Psoas muscle (tissue), 8 donors: ENCODE measurements at regions of chr7 and their contacts with region 1.

Region 1: GRCh38 chr7:139075031-139075652 is 34.4 kb downstream of the ZC3HAV1 start:
- DNase-seq: peak; percentile 56 to 65
- ATAC-seq: peak; percentile 65 to 92 (median 79)
- H3K4me3 ChIP-seq: no peak overlapping the region
- H3K27ac ChIP-seq: no peak overlapping the region
- H3K4me1 ChIP-seq: no peaks in the 10 kb centered on the region
- H3K27me3 ChIP-seq: no peaks in the 10 kb centered on the region
- CTCF ChIP-seq: peak; percentile 84

Region 2: DNA sequence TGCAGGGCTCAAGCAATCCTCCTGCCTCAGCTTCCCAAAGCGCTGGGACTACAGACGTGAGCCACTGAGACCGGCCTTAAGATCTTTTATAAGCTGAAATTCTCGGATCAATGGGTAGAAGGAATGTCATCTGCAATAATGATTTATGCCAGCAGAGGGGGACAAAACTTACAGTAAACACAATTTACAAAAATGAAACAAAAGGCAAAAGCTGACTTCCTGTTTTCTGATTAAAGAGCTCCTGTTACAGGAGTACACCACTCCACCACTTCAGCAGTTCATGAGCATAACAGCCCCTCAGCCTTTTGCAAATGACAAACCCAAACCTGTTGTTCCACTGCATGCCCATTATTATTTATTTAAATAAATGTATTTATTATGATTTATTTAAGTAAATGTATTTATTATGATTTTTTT is 188.6 kb before region 1 on chr7:
- intact Hi-C with region 1: loop called (anchors 5 to 10 kb)
- DNase-seq: no peak
- ATAC-seq: no peak
- H3K4me3 ChIP-seq: no peak overlapping the region
- H3K27ac ChIP-seq: no peak overlapping the region
- H3K4me1 ChIP-seq: peaks cover 7% of the 10 kb centered on the region
- H3K27me3 ChIP-seq: no peaks in the 10 kb centered on the region
- CTCF ChIP-seq: peak; percentile 57

Region 3: DNA sequence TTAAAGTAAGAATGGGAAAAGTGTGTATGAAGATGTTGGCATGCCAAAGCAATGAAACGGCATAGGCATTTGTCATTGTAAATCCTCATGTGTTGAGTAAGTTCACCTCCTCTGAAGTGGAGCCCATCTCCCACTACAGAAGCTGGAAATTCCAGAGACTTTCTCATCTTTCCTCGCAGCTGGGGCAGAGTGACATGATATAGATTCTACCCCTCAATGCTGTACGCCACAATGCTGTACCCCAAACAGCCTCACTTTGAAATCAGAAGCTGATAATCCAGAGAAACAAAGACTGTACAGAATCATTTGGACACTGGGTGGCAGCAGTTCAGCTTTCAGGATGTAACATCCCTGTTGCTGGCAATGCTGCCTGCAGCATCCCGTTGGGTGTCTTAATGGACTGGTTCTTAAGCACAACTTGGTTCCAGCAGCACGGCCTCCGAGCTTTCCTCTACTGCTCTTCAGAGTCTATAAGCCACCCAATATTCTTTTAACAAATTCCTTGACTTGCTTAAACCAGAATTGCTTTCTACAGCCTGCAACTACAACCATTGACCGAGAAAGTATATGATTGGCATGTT is 58.1 kb before region 1 on chr7:
- intact Hi-C with region 1: loop called in 1 of 2 experiments (anchors 5 kb)
- DNase-seq: peak in 1 of 2 donors; percentile 35
- ATAC-seq: peak in 3 of 4 donors; percentile 51 to 68 (median 61)
- H3K4me3 ChIP-seq: no peak overlapping the region
- H3K27ac ChIP-seq: no peak overlapping the region
- H3K4me1 ChIP-seq: no peaks in the 10 kb centered on the region
- H3K27me3 ChIP-seq: no peaks in the 10 kb centered on the region
- CTCF ChIP-seq: peak; percentile 61